Activated CD4-positive, alpha-beta T cell treated with anti-CD3 and anti-CD28 coated beads for 36 hours (primary cell): ENCODE measurements at regions of chr3 and their contacts with region 1.

Region 1: DNA sequence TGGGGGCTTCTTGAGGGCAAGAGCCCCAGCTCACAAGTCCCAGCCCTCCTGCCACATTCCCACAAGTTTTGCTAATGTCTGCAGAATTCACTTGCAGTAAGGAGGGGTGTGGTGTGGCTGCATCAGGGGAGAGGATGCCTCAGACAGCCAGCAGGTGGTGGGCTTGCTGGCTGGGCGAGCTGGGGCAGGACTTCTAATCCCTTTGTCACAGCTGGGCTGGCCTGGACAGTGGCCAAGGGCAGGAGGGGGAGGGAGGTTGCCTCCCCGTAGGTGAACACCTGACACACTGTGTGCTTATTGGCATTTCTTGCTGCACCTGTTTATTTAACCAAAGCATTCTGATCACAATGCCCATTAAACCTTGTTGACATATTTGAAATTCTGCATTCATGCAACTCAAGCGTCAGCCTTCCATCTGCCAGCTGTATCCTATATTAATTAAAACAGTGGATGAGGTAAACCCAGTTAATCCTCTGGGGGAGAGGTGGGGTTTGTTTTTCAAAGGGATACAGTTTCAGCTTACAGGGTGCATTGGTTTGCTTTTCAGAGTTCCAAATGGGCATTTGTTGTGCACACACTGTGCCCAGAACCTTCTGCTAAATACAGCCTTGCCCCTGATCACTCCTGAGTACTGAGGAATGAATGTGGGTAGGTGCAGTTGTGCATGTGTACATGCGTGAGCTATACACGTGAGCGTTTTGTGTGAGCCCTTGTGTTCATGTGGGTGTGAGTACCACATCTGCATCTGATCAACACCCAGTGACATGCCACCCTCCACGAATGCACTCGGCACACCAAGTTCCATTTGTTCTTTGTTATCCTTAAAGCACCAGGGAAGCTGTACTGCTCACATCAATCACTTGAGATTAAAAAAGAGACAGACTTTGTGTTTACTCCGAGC is 268.7 kb downstream of the XXYLT1 start:
- DNase-seq: peak; percentile 40
- ATAC-seq: no peak
- H3K4me3 Mint-ChIP-seq: no peak overlapping the region
- H3K27ac Mint-ChIP-seq: no peak overlapping the region
- H3K4me1 Mint-ChIP-seq: no peaks in the 10 kb centered on the region
- H3K27me3 Mint-ChIP-seq: peaks cover 5% of the 10 kb centered on the region

Region 2: DNA sequence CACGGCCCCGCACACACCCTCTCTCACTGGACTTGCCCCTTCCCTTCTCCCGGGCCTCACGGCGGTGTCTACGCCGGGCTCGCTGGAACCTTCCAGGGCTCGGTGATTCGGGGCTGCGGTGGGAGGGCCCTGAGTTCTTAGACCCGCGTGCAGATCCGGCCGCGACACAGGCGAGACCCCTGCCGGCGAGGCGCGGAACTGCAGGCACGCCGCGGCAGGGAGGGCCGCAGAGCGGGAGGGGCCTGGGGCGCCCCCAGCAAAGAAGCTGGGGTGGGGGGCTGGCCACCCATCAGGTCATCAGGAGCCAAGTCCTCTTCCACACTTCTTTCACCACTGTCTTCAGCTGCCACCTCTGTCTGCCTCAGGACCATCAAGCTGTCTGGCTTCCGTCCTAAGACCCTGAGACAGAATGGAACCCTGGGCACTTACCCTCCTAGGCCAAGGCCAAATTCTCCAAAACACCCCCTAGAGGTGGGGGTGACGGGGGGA is 104.3 kb after region 1 on chr3:
- CTCF ChIA-PET with region 1: no interaction called
- POLR2A ChIA-PET with region 1: no interaction called
- intact Hi-C with region 1: loop called in 1 of 2 experiments (anchors 1 kb)
- DNase-seq: peak; percentile 80
- ATAC-seq: peak; percentile 85
- H3K4me3 Mint-ChIP-seq: peak overlapping the region; percentile 9
- H3K27ac Mint-ChIP-seq: peak overlapping the region; percentile 55
- H3K4me1 Mint-ChIP-seq: peaks cover 4% of the 10 kb centered on the region
- H3K27me3 Mint-ChIP-seq: no peaks in the 10 kb centered on the region